ENCODE measurements at regions of chr4 and their contacts with region 1.

Region 1: GRCh38 chr4:1809754-1810511 is 16.8 kb downstream of the FGFR3 start:
- DNase-seq: peak; percentile 65 to 90 (median 89)
- ATAC-seq: peak; percentile 78 to 80
- H3K4me3 ChIP-seq: no peak overlapping the region
- H3K27ac ChIP-seq: no peak overlapping the region
- H3K4me1 ChIP-seq: no peaks in the 10 kb centered on the region
- H3K27me3 ChIP-seq: no peaks in the 10 kb centered on the region

Region 2: DNA sequence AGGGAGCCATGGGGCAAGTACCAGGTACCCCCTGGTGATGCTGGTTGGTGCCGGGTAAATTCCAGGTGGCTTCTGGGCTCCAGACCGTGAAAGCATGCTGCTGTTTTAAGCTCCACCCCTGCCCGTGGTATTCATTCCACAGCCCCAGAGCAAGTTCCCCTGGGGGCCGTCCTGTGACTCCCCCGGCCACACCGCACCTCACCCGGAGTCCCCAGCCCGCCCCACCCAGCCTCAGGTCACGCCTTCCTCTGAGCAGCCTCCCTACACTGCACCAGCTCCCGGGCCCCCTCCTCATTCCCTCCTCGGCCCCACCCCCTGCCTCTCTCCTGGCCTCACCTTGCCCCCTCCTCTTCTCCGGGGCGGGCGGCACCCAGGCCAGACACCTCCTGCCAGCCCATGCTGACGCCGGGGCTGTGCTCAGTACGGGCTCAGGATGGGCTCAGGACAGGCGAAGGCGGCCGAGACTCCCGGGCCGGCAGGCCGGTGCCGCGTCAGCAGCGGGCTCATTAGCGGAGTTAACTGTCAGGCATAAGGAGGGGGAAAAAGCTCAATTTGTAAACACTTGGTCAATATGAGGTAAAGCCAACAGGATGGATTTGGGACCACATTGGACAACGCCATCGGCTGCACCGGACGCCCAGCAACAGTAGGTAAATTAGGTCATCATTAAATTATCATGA is 253.3 kb before region 1 on chr4:
- intact Hi-C with region 1: no loop called
- DNase-seq: no peak
- ATAC-seq: no peak
- H3K4me3 ChIP-seq: no peak overlapping the region
- H3K27ac ChIP-seq: no peak overlapping the region
- H3K4me1 ChIP-seq: no peaks in the 10 kb centered on the region
- H3K27me3 ChIP-seq: no peaks in the 10 kb centered on the region

Region 3: GRCh38 chr4:1683736-1684505 is 126.0 kb before region 1 on chr4 and contains the start of gene FAM53A:
- intact Hi-C with region 1: no loop called
- DNase-seq: peak in 2 of 3 donors; percentile 91 to 98
- ATAC-seq: peak; percentile 94 to 96
- H3K4me3 ChIP-seq: peak within 1 kb of the TSS; percentile 30
- H3K27ac ChIP-seq: peak within 1 kb of the TSS; percentile 22
- H3K4me1 ChIP-seq: no peaks in the 10 kb centered on the region
- H3K27me3 ChIP-seq: no peaks in the 10 kb centered on the region
- total RNA-seq, gene FAM53A: 1.1 to 1.6 (median 1.1) TPM

Region 4: GRCh38 chr4:1740021-1740545 is 69.8 kb before region 1 on chr4:
- intact Hi-C with region 1: loop called in 1 of 4 experiments (anchors 5 kb)
- DNase-seq: no peak
- ATAC-seq: no peak
- H3K4me3 ChIP-seq: no peak overlapping the region
- H3K27ac ChIP-seq: no peak overlapping the region
- H3K4me1 ChIP-seq: no peaks in the 10 kb centered on the region
- H3K27me3 ChIP-seq: no peaks in the 10 kb centered on the region

Region 5: DNA sequence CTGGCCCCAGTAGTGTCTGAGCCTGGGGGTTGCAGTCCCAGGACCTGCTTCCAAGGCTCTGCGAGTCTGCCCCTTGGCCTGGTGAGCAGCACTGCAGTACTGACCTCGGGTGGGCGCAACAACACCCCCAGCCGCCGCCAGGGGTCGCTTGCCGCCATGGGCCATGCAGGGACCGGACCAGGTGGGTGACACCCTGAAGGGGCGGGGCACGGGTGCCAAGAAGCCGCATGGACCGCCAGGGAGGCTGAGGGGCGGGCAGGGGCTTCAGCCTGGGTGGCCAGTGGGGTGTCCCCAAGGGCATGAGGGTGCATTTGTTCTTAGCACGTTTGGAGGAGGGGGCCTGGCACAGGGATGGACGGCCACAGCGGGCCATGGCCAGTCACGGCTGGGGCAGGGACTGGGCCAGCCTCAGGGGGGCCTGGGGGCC is 63.7 kb before region 1 on chr4:
- intact Hi-C with region 1: loop called (anchors 2 to 10 kb)
- DNase-seq: peak; percentile 81 to 92 (median 89)
- ATAC-seq: peak; percentile 60 to 78
- H3K4me3 ChIP-seq: no peak overlapping the region
- H3K27ac ChIP-seq: no peak overlapping the region
- H3K4me1 ChIP-seq: no peaks in the 10 kb centered on the region
- H3K27me3 ChIP-seq: no peaks in the 10 kb centered on the region

Region 6: DNA sequence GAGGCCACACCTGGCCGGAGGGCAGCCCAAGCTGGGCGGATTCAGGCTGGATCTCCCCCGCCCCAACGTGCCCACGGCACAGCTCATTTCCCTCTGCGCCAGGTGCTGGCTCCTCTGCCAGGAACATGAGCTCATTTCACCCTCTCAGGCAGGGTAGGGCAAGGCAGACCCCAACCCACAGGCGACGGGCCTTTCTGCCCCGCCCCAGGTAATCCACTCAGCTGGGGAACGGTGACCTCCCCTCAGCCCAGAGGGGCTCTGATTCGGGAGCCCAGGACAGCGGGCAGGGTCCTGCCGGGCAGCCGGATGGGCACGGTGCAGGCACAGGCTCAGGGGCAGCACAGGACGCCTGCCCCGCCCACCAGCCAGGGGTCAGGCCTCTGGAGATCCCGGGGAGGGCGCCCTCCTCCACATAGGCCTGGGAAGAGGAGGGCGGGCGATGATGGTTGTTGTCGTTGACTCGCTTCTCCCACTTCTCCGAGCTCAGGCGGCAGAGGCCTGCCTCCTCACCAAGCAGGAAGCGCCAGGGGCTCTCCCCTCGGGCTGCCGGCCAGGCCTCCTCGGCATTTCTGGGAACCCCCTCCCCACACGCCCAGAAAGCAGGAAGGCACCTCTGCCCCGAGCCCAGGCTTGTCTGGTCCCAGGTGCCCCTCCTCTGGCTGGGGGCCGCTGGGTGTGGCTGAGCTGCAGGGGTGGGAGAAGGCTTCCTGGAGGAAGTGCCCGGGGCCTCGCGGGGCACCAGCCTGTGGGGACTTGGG is 57.5 kb before region 1 on chr4:
- intact Hi-C with region 1: loop called (anchors 2 to 10 kb)
- DNase-seq: peak in 2 of 3 donors; percentile 38 to 75
- ATAC-seq: peak; percentile 8 to 59
- H3K4me3 ChIP-seq: no peak overlapping the region
- H3K27ac ChIP-seq: no peak overlapping the region
- H3K4me1 ChIP-seq: no peaks in the 10 kb centered on the region
- H3K27me3 ChIP-seq: no peaks in the 10 kb centered on the region

Region 7: DNA sequence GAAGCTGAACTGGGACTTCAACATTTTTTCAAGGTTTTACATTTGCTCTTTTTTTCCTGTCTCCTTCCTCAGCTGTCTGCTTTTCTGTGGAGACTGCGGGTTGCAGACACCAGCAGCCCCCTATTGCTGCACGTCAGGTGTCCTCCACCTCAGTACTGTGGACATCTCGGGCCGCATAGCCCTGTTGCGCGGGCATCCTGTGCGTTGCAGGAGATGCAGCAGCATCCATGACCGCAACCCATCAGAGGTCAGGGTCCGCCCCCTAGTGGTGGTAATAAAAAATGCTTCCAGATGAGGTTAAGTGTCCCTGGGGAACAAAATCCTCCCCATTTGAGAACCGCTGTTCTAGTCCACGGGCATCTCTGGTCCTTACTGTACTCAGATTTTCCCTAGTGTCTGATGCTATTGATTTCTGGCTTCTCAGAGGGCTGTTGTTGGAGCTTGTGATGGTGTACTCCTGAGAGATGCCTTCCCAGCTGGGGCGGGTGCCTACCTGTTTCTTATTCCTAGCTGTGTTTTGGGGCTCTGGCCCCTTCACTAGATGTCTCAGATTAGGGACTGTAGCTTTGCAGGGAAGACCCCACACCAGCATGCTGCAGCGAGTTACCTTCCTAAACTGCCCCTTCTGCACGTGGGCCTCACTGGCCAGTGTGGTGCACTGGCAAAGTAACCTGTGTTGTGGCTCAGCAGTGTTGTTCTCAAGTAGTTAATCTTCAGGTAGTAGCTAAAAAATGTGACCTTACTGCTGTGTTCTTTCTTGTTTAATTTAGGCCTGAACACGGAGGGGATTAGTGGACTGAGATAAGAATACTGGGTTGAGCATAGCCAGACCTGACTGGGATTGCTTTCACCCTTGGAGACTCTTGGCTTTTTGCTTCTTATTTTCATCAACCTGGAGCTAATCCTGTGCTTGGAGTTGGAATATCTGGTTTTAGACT is 89.5 kb after region 1 on chr4:
- intact Hi-C with region 1: loop called in 2 of 4 experiments (anchors 10 kb)
- DNase-seq: peak; percentile 61 to 78 (median 77)
- ATAC-seq: peak; percentile 85 to 91
- H3K4me3 ChIP-seq: no peak overlapping the region
- H3K27ac ChIP-seq: no peak overlapping the region
- H3K4me1 ChIP-seq: no peaks in the 10 kb centered on the region
- H3K27me3 ChIP-seq: no peaks in the 10 kb centered on the region

Region 8: GRCh38 chr4:2222838-2223237 is 412.9 kb after region 1 on chr4:
- intact Hi-C with region 1: no loop called
- DNase-seq: no peak
- ATAC-seq: no peak
- H3K4me3 ChIP-seq: no peak overlapping the region
- H3K27ac ChIP-seq: no peak overlapping the region
- H3K4me1 ChIP-seq: no peaks in the 10 kb centered on the region
- H3K27me3 ChIP-seq: no peaks in the 10 kb centered on the region